CD8-positive, alpha-beta T cell (primary cell): ENCODE measurements at regions of chr12 and their contacts with region 1.

Region 1: DNA sequence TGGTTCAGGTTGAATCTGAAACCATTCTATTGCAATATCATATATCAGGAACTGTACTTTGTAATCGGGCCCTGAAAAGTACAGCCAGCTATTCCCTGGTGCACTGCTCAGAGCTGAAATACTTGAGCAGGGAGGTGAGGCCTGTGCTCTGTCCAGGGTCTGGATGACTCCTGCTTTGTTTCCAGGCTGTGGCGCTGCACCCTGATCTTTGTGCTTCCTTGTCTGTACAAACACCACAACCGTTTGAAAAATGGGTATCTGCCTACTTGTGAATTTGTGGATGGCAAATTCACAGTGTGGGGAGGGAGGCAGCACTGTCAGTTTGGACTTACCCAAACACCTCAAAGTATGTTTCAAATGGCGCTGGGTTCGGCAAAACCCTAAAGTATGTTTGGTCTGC is 155.4 kb upstream of the FAR2 start:
- DNase-seq: no peak
- ATAC-seq: no peak
- H3K4me3 ChIP-seq: no peak overlapping the region
- H3K4me3 Mint-ChIP-seq: no peak overlapping the region
- H3K27ac ChIP-seq: no peak overlapping the region
- H3K27ac Mint-ChIP-seq: no peak overlapping the region
- H3K4me1 ChIP-seq: no peaks in the 10 kb centered on the region
- H3K4me1 Mint-ChIP-seq: no peaks in the 10 kb centered on the region
- H3K27me3 ChIP-seq: no peaks in the 10 kb centered on the region
- H3K27me3 Mint-ChIP-seq: peaks cover 4% of the 10 kb centered on the region
- CTCF ChIP-seq: no peak

Region 2: GRCh38 chr12:29691141-29691854 is 697.6 kb after region 1 on chr12:
- CTCF ChIA-PET with region 1: no interaction called
- POLR2A ChIA-PET with region 1: no interaction called
- intact Hi-C with region 1: loop called in 1 of 2 experiments (anchors 5 kb)
- DNase-seq: no peak
- ATAC-seq: no peak
- H3K4me3 ChIP-seq: no peak overlapping the region
- H3K4me3 Mint-ChIP-seq: no peak overlapping the region
- H3K27ac ChIP-seq: no peak overlapping the region
- H3K27ac Mint-ChIP-seq: no peak overlapping the region
- H3K4me1 ChIP-seq: no peaks in the 10 kb centered on the region
- H3K4me1 Mint-ChIP-seq: no peaks in the 10 kb centered on the region
- H3K27me3 ChIP-seq: no peaks in the 10 kb centered on the region
- H3K27me3 Mint-ChIP-seq: peaks cover 3% of the 10 kb centered on the region
- CTCF ChIP-seq: no peak